Mammary epithelial cell (primary cell): ENCODE measurements at regions of chr17 and their contacts with region 1.

Region 1: DNA sequence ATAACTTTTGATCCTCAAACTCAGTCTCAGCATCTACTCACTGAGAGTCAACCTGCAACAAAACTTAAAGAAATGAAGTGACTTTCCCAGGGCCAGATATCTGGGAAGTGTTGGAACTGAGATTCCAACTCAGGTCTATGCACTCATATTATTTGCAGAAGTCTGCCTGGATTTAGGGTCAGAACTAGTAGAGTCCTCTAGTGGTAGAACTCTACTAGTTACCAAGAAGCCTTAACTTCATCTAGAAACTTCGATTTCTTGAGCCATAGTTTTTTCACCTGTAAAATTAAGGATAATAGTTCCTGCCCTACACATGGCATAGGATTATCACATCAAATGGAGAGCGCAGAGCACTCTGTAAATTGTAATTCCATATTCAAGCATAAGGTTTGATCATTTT is 23.4 kb upstream of the KRT24 start:
- DNase-seq: no peak
- H3K4me3 ChIP-seq: no peak overlapping the region
- H3K27ac ChIP-seq: no peak overlapping the region
- H3K4me1 ChIP-seq: no peaks in the 10 kb centered on the region
- H3K27me3 ChIP-seq: no peaks in the 10 kb centered on the region
- CTCF ChIP-seq: peak; percentile 19 to 64

Region 2: DNA sequence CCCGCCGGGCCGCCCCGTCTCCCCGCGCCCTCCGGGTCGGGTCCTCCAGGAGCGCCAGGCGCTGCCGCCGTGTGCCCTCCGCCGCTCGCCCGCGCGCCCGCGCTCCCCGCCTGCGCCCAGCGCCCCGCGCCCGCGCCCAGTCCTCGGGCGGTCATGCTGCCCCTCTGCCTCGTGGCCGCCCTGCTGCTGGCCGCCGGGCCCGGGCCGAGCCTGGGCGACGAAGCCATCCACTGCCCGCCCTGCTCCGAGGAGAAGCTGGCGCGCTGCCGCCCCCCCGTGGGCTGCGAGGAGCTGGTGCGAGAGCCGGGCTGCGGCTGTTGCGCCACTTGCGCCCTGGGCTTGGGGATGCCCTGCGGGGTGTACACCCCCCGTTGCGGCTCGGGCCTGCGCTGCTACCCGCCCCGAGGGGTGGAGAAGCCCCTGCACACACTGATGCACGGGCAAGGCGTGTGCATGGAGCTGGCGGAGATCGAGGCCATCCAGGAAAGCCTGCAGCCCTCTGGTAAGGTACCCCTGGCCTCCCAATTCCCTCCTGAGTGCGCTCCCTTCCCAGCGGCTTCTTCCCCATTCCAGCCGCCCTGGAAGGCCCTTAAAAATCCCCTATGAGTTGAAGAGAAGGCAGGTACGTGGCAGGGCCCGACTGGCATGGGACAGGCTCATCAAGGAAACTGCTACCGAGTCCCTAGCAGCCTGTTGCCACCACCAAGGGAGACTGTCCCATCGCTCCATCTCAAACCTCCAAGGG is 283.2 kb before region 1 on chr17:
- CTCF ChIA-PET with region 1: no interaction called
- dilution Hi-C with region 1: no loop called
- in situ Hi-C with region 1: no loop called
- intact Hi-C with region 1: loop called (anchors 10 kb)
- DNase-seq: peak; percentile 55
- H3K4me3 ChIP-seq: peak overlapping the region; percentile 25 to 60 (median 45)
- H3K27ac ChIP-seq: peak overlapping the region; percentile 0
- H3K4me1 ChIP-seq: peaks cover 34% of the 10 kb centered on the region
- H3K27me3 ChIP-seq: no peaks in the 10 kb centered on the region
- CTCF ChIP-seq: peak; percentile 41 to 68

Region 3: GRCh38 chr17:40615295-40615988 is 111.5 kb before region 1 on chr17:
- CTCF ChIA-PET with region 1: no interaction called
- dilution Hi-C with region 1: no loop called
- in situ Hi-C with region 1: no loop called
- intact Hi-C with region 1: loop called (anchors 1 kb)
- DNase-seq: peak; percentile 67
- H3K4me3 ChIP-seq: no peak overlapping the region
- H3K27ac ChIP-seq: no peak overlapping the region
- H3K4me1 ChIP-seq: no peaks in the 10 kb centered on the region
- H3K27me3 ChIP-seq: no peaks in the 10 kb centered on the region
- CTCF ChIP-seq: peak; percentile 59 to 68

Region 4: GRCh38 chr17:40647624-40648383 is 79.1 kb before region 1 on chr17 and contains the start of gene SMARCE1:
- CTCF ChIA-PET with region 1: no interaction called
- dilution Hi-C with region 1: loop called (anchors 5 kb)
- in situ Hi-C with region 1: no loop called
- intact Hi-C with region 1: loop called (anchors 2 kb)
- DNase-seq: peak; percentile 78
- H3K4me3 ChIP-seq: peak within 1 kb of the TSS; percentile 74 to 87 (median 82)
- H3K27ac ChIP-seq: peak within 1 kb of the TSS; percentile 96
- H3K4me1 ChIP-seq: peaks cover 12% of the 10 kb centered on the region
- H3K27me3 ChIP-seq: no peaks in the 10 kb centered on the region
- CTCF ChIP-seq: no peak
- total RNA-seq, gene SMARCE1: 75.0 to 94.2 TPM